H1 (cell line): ENCODE measurements at regions of chr2 and their contacts with region 1.

Region 1: DNA sequence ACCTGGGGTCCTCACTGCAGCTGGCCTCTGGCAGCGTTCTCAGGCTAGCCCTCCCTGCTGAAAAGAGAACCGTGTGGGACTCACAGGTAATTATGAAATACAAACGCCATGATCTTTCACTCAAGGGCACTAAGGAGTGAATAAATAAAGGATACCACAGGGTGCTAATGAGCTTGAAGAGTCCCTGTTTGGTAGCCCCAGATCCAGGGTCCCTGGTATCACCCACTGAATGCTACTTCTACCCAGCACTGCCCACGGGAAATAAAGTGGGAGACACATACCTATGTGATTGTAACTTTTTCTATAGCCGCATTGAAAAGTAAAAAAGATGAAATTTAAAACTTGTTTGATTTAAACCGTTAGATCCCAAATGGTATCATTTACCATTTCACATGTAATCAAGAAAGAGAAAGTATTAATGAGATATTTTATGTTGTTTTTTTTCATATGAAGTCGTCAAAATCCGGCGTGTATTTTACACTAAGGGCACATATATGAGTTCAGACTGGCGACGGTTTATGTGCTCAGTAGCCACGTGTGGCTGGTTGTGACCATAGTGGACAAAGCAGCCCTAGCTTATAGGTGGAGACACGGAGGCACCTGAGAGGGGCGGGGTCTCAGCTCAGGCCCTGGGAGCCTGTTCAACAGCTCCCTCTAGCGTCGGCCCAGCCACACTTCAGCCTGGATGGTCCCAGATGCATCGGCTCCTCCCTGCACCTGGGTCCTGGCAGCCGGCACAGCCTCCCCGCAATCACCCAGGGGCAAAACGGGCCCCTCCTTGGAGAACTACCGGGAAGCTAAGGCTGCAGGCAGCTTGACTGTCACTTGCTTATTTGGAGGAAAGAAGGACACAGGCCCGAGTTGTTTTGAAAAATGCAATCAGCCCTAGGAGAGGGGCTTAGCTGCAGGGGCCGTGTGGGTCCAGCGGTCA is 39.2 kb downstream of the ODC1 start:
- DNase-seq: peak; percentile 84 to 93
- H3K4me3 ChIP-seq: no peak overlapping the region
- H3K27ac ChIP-seq: no peak overlapping the region
- H3K4me1 ChIP-seq: peaks cover 0 to 3% (median 2%) of the 10 kb centered on the region in 4 experiments; a peak in 2 of 7 replicates
- H3K27me3 ChIP-seq: no peaks in the 10 kb centered on the region; a peak in 1 of 7 replicates
- CTCF ChIP-seq: peak; percentile 94 to 99 (median 97)
- EP300 ChIP-seq: no peak
- POLR2A ChIP-seq: no peak
- RAD21 ChIP-seq: peak; percentile 98 to 99

Region 2: DNA sequence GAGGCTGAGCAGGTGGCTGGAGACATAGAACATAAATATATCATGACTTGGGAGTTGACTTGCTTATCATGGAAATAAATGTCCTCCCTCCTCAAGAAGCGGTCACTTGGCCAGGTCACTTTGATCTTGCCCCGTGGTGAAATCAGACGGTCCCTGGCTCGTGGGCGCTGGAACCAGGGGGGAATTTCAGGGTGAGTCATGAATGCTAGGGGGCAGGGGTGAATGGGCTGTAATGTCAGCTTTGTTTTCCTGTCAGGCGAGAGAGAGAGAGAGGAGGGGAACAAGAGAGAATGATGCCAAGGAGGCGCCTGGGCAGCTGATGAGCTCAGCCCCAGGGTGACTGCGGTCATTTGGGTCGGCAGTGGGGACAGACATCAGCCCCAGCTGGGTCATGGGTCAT is 238.7 kb before region 1 on chr2:
- CTCF ChIA-PET with region 1: interaction called, 13 read pairs
- POLR2A ChIA-PET with region 1: no interaction called
- DNase-seq: no peak
- H3K4me3 ChIP-seq: no peak overlapping the region
- H3K27ac ChIP-seq: no peak overlapping the region
- H3K4me1 ChIP-seq: peaks cover 0 to 4% (median 3%) of the 10 kb centered on the region in 4 experiments; a peak in 4 of 7 replicates
- H3K27me3 ChIP-seq: no peaks in the 10 kb centered on the region
- CTCF ChIP-seq: no peak
- EP300 ChIP-seq: no peak
- POLR2A ChIP-seq: no peak
- RAD21 ChIP-seq: no peak

Region 3: DNA sequence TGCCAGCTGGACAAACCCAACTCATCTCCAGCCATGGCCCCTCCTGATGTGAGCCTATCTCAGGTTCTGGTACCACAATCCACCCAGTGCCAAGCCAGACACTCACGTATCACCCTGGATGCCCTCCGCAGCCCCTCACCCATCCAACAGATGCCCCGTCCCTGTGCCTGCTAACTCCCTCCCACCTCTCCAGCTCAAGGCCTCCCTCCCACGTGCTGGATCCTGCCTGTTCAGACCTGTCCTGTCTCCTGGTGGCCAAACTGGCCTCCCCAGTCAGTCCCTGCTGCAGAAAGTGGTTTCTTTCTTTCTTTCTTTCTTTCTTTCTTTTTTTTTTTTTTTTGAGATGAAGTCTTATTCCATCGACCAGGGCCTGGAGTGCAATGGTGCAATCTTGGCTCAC is 200.2 kb before region 1 on chr2:
- CTCF ChIA-PET with region 1: no interaction called
- POLR2A ChIA-PET with region 1: no interaction called
- DNase-seq: no peak
- H3K4me3 ChIP-seq: no peak overlapping the region
- H3K27ac ChIP-seq: no peak overlapping the region
- H3K4me1 ChIP-seq: peaks cover 0 to 3% (median 1%) of the 10 kb centered on the region in 4 experiments; a peak in 6 of 7 replicates
- H3K27me3 ChIP-seq: no peaks in the 10 kb centered on the region
- CTCF ChIP-seq: no peak
- EP300 ChIP-seq: no peak
- POLR2A ChIP-seq: no peak
- RAD21 ChIP-seq: no peak

Region 4: GRCh38 chr2:10267551-10268465 is 141.1 kb before region 1 on chr2:
- CTCF ChIA-PET with region 1: interaction called, 18 read pairs
- POLR2A ChIA-PET with region 1: no interaction called
- DNase-seq: no peak
- H3K4me3 ChIP-seq: no peak overlapping the region
- H3K27ac ChIP-seq: no peak overlapping the region
- H3K4me1 ChIP-seq: peaks cover 0 to 2% (median 0%) of the 10 kb centered on the region in 4 experiments; a peak in 1 of 7 replicates
- H3K27me3 ChIP-seq: no peaks in the 10 kb centered on the region
- CTCF ChIP-seq: peak; percentile 44 to 50 (median 49)
- EP300 ChIP-seq: no peak
- POLR2A ChIP-seq: no peak
- RAD21 ChIP-seq: peak; percentile 32 to 52; a peak in 3 of 4 replicates

Region 5: GRCh38 chr2:10297241-10297830 is 111.6 kb before region 1 on chr2:
- CTCF ChIA-PET with region 1: interaction called, 17 read pairs
- POLR2A ChIA-PET with region 1: interaction called, 5 read pairs
- DNase-seq: no peak
- H3K4me3 ChIP-seq: no peak overlapping the region
- H3K27ac ChIP-seq: no peak overlapping the region
- H3K4me1 ChIP-seq: peaks cover 0 to 17% (median 4%) of the 10 kb centered on the region in 4 experiments; a peak in 4 of 7 replicates
- H3K27me3 ChIP-seq: peaks cover 0 to 5% (median 0%) of the 10 kb centered on the region in 4 experiments; a peak in 1 of 7 replicates
- CTCF ChIP-seq: no peak
- EP300 ChIP-seq: no peak
- POLR2A ChIP-seq: no peak
- RAD21 ChIP-seq: no peak

Region 6: GRCh38 chr2:10316336-10316735 is 92.6 kb before region 1 on chr2:
- CTCF ChIA-PET with region 1: interaction called, 17 read pairs
- POLR2A ChIA-PET with region 1: no interaction called
- DNase-seq: no peak
- H3K4me3 ChIP-seq: no peak overlapping the region
- H3K27ac ChIP-seq: no peak overlapping the region
- H3K4me1 ChIP-seq: peaks cover 0 to 2% (median 0%) of the 10 kb centered on the region in 4 experiments; a peak in 1 of 7 replicates
- H3K27me3 ChIP-seq: no peaks in the 10 kb centered on the region
- CTCF ChIP-seq: no peak
- EP300 ChIP-seq: no peak
- POLR2A ChIP-seq: no peak
- RAD21 ChIP-seq: no peak

Region 7: DNA sequence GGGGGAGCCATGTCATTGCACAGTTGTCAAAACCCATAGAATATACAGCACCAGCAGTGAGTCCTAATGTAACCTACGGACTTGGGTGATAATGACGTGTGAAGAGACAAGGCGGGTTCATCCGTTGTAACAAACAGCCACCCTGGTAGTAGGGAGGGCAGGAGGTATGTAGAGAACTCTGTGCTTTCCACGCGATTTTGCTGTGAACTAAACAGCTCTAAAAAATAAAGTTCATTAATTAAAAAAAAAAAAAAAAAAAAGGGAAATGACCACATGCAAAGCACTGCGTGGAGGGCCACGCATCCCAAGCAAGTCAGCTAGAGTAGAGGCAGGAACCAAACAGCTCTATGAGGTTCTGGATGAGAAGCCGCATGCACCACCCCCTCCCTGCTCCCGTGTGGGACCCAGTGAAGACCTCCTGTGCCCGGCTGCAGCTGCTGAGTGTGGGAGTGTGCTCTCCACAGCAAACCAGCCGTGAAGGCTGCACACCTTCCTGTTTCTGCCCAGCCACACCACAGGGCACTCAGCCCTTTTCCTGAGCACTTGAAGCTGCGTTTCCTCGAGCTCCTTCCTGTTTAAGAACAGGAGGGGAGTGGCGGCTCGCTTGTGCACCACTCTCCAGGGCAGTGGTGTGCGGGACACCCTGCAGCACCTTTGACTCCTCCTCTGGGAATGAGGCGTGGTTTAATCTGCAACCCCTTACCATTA is 26.4 kb before region 1 on chr2:
- CTCF ChIA-PET with region 1: interaction called, 23 read pairs
- POLR2A ChIA-PET with region 1: interaction called, 5 read pairs
- DNase-seq: no peak
- H3K4me3 ChIP-seq: no peak overlapping the region
- H3K27ac ChIP-seq: no peak overlapping the region
- H3K4me1 ChIP-seq: peaks cover 3 to 17% (median 13%) of the 10 kb centered on the region in 4 experiments
- H3K27me3 ChIP-seq: no peaks in the 10 kb centered on the region
- CTCF ChIP-seq: no peak
- EP300 ChIP-seq: no peak
- POLR2A ChIP-seq: no peak
- RAD21 ChIP-seq: no peak

Region 8: GRCh38 chr2:10434886-10435819 is 26.2 kb after region 1 on chr2:
- CTCF ChIA-PET with region 1: interaction called, 35 read pairs
- POLR2A ChIA-PET with region 1: no interaction called
- DNase-seq: peak in 1 of 2 experiments; percentile 93
- H3K4me3 ChIP-seq: no peak overlapping the region
- H3K27ac ChIP-seq: no peak overlapping the region
- H3K4me1 ChIP-seq: peaks cover 0 to 3% (median 1%) of the 10 kb centered on the region in 4 experiments; a peak in 3 of 7 replicates
- H3K27me3 ChIP-seq: peaks cover 0 to 8% (median 3%) of the 10 kb centered on the region in 4 experiments; a peak in 3 of 7 replicates
- CTCF ChIP-seq: peak in 2 of 3 experiments; percentile 88 to 96; a peak in 3 of 4 replicates
- EP300 ChIP-seq: no peak
- POLR2A ChIP-seq: no peak
- RAD21 ChIP-seq: peak; percentile 99

Region 9: DNA sequence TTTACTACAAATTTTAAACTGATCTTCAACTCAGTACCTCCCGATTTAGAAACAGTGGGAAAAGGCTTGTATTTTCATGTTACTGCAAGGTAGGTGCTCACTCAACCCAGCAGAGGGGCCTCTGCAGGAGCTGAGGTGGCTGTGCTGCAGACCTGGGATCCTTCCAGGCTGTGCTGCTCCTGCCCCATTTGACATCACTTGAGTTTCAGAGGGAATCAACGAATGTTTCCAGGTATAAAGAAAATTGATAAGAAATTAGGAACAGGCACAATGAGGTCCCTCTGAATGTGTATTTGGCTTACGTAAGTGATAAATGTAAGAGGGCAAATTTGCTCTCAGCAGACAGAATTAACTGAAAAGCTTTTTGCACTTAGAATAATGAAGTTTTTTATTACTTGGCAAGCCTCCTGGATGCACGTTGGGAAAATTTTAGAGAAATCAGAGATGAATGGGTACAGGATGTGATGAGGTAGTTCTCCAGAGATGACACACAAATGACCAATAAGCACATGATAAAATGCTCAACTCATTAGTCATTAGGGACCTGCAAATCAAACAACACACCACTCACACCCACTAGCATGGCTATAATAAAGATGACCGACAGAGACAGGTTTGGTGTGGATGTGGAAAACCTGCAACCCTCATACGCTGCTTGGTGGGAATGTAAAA is 166.8 kb after region 1 on chr2:
- CTCF ChIA-PET with region 1: no interaction called
- POLR2A ChIA-PET with region 1: no interaction called
- DNase-seq: no peak
- H3K4me3 ChIP-seq: no peak overlapping the region
- H3K27ac ChIP-seq: no peak overlapping the region
- H3K4me1 ChIP-seq: peaks cover 0 to 7% (median 2%) of the 10 kb centered on the region in 4 experiments; a peak in 4 of 7 replicates
- H3K27me3 ChIP-seq: no peaks in the 10 kb centered on the region
- CTCF ChIP-seq: no peak
- EP300 ChIP-seq: no peak
- POLR2A ChIP-seq: no peak
- RAD21 ChIP-seq: no peak